Astrocyte of the spinal cord (primary cell): ENCODE measurements at regions of chr1 and their contacts with region 1.

Region 1: GRCh38 chr1:235093696-235094592 is 34.7 kb downstream of the TOMM20 start:
- DNase-seq: peak; percentile 72
- H3K4me3 ChIP-seq: peak overlapping the region; percentile 7
- CTCF ChIP-seq: peak; percentile 98

Region 2: GRCh38 chr1:234730770-234731568 is 363.0 kb before region 1 on chr1:
- in situ Hi-C with region 1: loop called (anchors 25 kb)
- DNase-seq: peak; percentile 86
- H3K4me3 ChIP-seq: no peak overlapping the region
- CTCF ChIP-seq: no peak